Gastrocnemius medialis (tissue), 4 donors: ENCODE measurements at regions of chr15 and their contacts with region 1.

Region 1: GRCh38 chr15:78506971-78507830 is at the start of gene HYKK:
- DNase-seq: peak; percentile 90 to 92
- ATAC-seq: peak; percentile 99 to 100
- H3K4me3 ChIP-seq: peak within 1 kb of the TSS; percentile 78 to 88 (median 86)
- H3K27ac ChIP-seq: peak within 1 kb of the TSS; percentile 68 to 83 (median 80)
- H3K4me1 ChIP-seq: peaks cover 5 to 14% of the 10 kb centered on the region in 2 donors
- H3K27me3 ChIP-seq: no peaks in the 10 kb centered on the region
- CTCF ChIP-seq: peak in 3 of 5 experiments; percentile 15 to 41 (median 26)
- POLR2A ChIP-seq: peak in 1 of 2 donors; percentile 23
- total RNA-seq, gene HYKK: 0.87 to 6.6 (median 4.4) TPM

Region 2: GRCh38 chr15:78225783-78226541 is 281.2 kb before region 1 on chr15:
- in situ Hi-C with region 1: no loop called
- intact Hi-C with region 1: no loop called
- DNase-seq: no peak
- ATAC-seq: no peak
- H3K4me3 ChIP-seq: no peak overlapping the region
- H3K27ac ChIP-seq: no peak overlapping the region
- H3K4me1 ChIP-seq: peaks cover 0 to 5% of the 10 kb centered on the region in 2 donors
- H3K27me3 ChIP-seq: no peaks in the 10 kb centered on the region
- CTCF ChIP-seq: no peak
- POLR2A ChIP-seq: no peak

Region 3: GRCh38 chr15:78540141-78540928 is 33.1 kb after region 1 on chr15 and contains the start of gene PSMA4:
- in situ Hi-C with region 1: no loop called
- intact Hi-C with region 1: loop called (anchors 1 kb)
- DNase-seq: peak; percentile 79 to 90
- ATAC-seq: peak; percentile 93 to 95
- H3K4me3 ChIP-seq: peak within 1 kb of the TSS; percentile 76 to 90 (median 84)
- H3K27ac ChIP-seq: peak within 1 kb of the TSS; percentile 91 to 97 (median 94)
- H3K4me1 ChIP-seq: peaks cover 12 to 16% of the 10 kb centered on the region in 2 donors
- H3K27me3 ChIP-seq: no peaks in the 10 kb centered on the region
- CTCF ChIP-seq: peak in 4 of 5 experiments; percentile 13 to 64 (median 48)
- POLR2A ChIP-seq: peak; percentile 86 to 94
- total RNA-seq, gene PSMA4: 176 to 243 (median 212) TPM